ENCODE measurements at regions of chr17 and their contacts with region 1.

Region 1: DNA sequence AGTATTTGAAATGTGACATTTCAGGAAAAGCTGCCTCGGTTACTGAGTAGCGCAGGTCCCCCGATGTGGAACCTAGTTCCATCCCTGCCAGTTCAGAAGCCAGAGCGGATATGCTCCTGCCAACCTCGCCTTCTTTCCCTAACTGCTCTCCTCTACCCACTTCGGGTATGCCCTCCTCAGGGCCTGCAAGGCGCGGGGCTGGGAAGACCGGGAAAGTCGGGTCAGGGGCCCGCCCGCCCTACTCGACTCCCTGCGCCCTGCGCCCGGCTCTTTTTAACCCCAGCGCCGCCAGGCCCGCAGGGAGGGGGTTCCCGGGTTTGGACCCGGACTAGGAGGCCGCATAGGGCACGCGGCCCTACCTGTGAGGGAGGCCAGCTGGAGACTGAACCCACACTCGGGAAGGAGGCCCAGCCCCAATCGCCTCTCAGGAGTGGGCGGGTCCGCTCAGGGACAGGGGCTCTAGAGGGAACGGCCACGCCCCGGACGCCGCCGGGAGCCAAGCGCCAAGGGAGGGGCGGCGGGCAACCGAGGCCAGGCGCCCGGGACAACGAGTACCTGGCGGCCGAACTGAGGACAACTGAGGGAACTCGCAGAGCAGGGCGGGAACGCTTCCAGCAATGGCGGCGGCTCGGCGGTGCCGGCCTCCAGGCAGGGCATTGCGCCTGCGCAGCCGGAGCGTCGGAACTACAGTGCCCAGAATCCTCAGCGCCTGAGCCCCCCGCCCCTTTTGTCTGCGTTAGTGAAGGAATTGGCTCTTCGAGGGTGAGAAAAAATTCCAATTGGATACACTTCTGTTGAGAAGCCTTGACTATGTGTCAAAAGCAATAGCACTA is at the start of gene ZNF624:
- DNase-seq: peak; percentile 75 to 94
- ATAC-seq: peak; percentile 95 to 99 (median 98)
- H3K4me3 ChIP-seq: peak within 1 kb of the TSS; percentile 58
- H3K4me3 Mint-ChIP-seq: peak within 1 kb of the TSS; percentile 84
- H3K27ac ChIP-seq: peak within 1 kb of the TSS; percentile 7
- H3K27ac Mint-ChIP-seq: peak within 1 kb of the TSS; percentile 21 to 91
- H3K4me1 ChIP-seq: peaks cover 9% of the 10 kb centered on the region
- H3K4me1 Mint-ChIP-seq: peaks cover 13 to 21% of the 10 kb centered on the region in 2 donors
- H3K27me3 ChIP-seq: no peaks in the 10 kb centered on the region
- H3K27me3 Mint-ChIP-seq: peaks cover 2 to 8% of the 10 kb centered on the region in 2 donors
- CTCF ChIP-seq: no peak
- total RNA-seq, gene ZNF624: 4.9 to 7.5 (median 7.2) TPM

Region 2: GRCh38 chr17:16589097-16589969 is 64.1 kb before region 1 on chr17:
- intact Hi-C with region 1: loop called (anchors 2 kb)
- DNase-seq: peak; percentile 91 to 96
- ATAC-seq: peak; percentile 98
- H3K4me3 ChIP-seq: peak overlapping the region; percentile 47
- H3K4me3 Mint-ChIP-seq: peak overlapping the region; percentile 79
- H3K27ac ChIP-seq: no peak overlapping the region
- H3K27ac Mint-ChIP-seq: no peak overlapping the region
- H3K4me1 ChIP-seq: peaks cover 14% of the 10 kb centered on the region
- H3K4me1 Mint-ChIP-seq: peaks cover 3 to 11% of the 10 kb centered on the region in 2 donors
- H3K27me3 ChIP-seq: no peaks in the 10 kb centered on the region
- H3K27me3 Mint-ChIP-seq: peaks cover 24 to 75% of the 10 kb centered on the region in 2 donors
- CTCF ChIP-seq: peak; percentile 97

Region 3: GRCh38 chr17:17108451-17109049 is 455.1 kb after region 1 on chr17:
- intact Hi-C with region 1: no loop called
- DNase-seq: no peak
- ATAC-seq: no peak
- H3K4me3 ChIP-seq: no peak overlapping the region
- H3K4me3 Mint-ChIP-seq: no peak overlapping the region
- H3K27ac ChIP-seq: peak overlapping the region; percentile 73
- H3K27ac Mint-ChIP-seq: peak overlapping the region; percentile 84 to 95
- H3K4me1 ChIP-seq: peaks cover 53% of the 10 kb centered on the region
- H3K4me1 Mint-ChIP-seq: peaks cover 47 to 76% of the 10 kb centered on the region in 2 donors
- H3K27me3 ChIP-seq: no peaks in the 10 kb centered on the region
- H3K27me3 Mint-ChIP-seq: no peaks in the 10 kb centered on the region
- CTCF ChIP-seq: no peak

Measured in natural killer cell (primary cell).